Dorsolateral prefrontal cortex (tissue), 120 donors: ENCODE measurements at regions of chr6 and their contacts with region 1.

Region 1: DNA sequence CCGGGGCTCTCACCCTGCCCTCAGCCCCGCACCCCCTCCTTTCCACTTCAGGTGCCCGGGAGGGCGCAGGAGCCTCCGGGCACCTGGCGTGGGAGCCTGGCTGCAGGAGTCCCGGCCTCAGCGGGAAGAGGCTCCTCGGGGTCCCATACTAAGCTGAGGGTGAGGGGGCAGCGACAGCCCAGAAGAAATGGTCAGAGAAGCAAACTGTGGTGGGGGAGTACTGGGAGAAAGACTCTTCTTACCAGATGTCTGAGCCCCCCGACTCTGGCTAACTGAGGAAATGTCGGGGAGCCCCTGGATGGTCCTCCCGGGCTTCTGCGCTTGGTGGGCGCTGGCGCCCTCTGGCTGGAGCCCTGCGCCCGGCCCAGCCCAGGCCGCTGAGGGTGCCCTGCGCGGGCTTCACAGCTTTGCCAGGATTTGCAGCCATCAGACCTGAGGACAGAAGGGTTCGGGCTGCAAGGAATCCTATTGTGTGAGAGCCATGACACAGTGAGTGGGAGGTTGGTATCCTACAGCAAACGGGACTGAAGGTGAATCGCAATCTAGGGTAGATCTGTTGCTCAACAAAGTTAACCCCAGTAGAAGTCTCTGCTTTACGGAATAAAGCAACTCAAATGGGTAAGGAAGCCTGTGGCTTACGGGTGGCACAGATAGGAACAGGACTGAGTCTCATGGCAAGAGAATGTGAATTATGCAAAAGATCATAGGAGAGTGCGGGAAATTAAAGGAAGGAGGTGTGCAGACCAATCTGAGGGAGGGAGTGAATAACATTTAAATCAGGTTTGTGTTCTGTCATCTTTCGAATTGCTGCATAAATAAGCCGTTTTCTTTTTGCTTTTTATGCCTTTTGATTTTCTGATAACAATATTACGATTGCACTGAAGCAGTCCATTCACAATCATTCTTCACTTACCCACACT is 639 bp upstream of the RCAN2 start:
- DNase-seq: peak; percentile 64 to 88 (median 78)
- H3K4me3 ChIP-seq: peak overlapping the region; percentile 61 to 90 (median 78)
- H3K27ac ChIP-seq: peak overlapping the region in 58 of 59 donors; percentile 61 to 95 (median 89)
- H3K27me3 ChIP-seq: no peaks in the 10 kb centered on the region
- CTCF ChIP-seq: peak; percentile 17 to 92 (median 78)

Region 2: GRCh38 chr6:46221222-46221793 is 270.6 kb before region 1 on chr6:
- intact Hi-C with region 1: loop called in 1 of 2 experiments (anchors 5 kb)
- DNase-seq: no peak
- H3K4me3 ChIP-seq: no peak overlapping the region
- H3K27ac ChIP-seq: peak overlapping the region in 34 of 59 donors; percentile 0 to 83 (median 31)
- H3K27me3 ChIP-seq: no peaks in the 10 kb centered on the region
- CTCF ChIP-seq: peak; percentile 52 to 99 (median 92)

Region 3: GRCh38 chr6:46437671-46438221 is 54.1 kb before region 1 on chr6:
- intact Hi-C with region 1: loop called in 1 of 2 experiments (anchors 5 kb)
- DNase-seq: no peak
- H3K4me3 ChIP-seq: no peak overlapping the region
- H3K27ac ChIP-seq: peak overlapping the region in 33 of 59 donors; percentile 1 to 74 (median 53)
- H3K27me3 ChIP-seq: no peaks in the 10 kb centered on the region
- CTCF ChIP-seq: no peak

Region 4: DNA sequence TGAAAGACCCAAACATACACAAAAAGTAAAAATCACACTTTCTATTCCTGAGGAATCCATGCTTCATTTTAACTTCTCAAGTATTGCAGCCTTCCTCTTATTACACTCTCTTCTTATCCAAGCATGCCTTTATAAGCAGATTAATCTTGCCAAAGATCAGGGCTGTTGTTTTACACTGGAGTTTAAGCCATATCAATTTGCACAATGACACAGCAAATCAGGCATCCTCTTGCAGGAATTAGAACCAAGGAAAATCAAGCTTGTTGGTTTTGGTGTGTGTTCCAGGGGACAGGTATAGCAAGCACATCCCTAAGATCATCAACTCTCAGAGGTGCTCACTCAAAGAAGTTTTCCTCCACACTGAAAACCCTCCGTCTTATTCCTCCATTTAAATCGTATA is 91.2 kb after region 1 on chr6:
- intact Hi-C with region 1: loop called in 1 of 2 experiments (anchors 10 kb)
- DNase-seq: no peak
- H3K4me3 ChIP-seq: no peak overlapping the region
- H3K27ac ChIP-seq: no peak overlapping the region
- H3K27me3 ChIP-seq: no peaks in the 10 kb centered on the region
- CTCF ChIP-seq: no peak

Region 5: DNA sequence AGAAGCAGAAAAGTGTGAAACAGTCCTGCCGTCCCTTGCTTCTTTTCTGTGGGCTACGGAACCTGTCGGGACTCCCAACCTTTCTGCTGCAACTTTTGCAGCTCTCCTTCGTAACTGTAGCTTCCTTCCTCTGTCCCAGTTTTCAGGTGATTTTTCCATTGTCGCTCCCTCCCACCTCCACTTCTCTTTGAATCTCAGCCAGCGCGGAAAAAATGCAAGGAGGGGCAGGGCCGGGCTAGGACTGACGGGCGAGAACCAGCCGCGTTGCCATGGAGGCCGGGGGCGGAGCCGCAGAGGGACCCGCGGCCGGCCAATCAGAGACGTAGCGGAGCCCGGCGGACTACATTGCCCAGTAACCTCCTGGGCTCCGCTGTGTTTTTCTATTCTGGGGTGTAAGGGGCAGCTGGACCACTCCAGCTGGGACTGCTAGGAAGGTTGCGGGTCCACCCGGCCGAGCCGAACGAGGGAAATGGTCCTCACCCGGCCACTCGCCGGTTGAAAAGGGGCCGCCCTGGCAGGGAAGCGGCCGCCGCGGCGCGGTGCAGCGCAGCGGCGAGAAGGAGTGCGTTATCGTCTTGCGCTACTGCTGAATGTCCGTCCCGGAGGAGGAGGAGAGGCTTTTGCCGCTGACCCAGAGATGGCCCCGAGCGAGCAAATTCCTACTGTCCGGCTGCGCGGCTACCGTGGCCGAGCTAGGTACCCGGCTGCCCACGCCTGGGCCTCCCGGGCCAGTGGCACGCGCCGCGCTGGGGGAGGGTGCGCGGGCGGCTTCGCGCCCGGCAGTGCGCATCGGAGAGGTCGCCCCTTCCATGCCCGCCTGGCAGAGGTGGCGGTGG is 160.9 kb after region 1 on chr6 and contains the starts of genes CYP39A1 and SLC25A27:
- intact Hi-C with region 1: loop called in 1 of 2 experiments (anchors 2 kb)
- DNase-seq: peak; percentile 92 to 100 (median 96)
- H3K4me3 ChIP-seq: peak within 1 kb of the TSS; percentile 60 to 99 (median 90)
- H3K27ac ChIP-seq: peak within 1 kb of the TSS; percentile 2 to 97 (median 90)
- H3K27me3 ChIP-seq: no peaks in the 10 kb centered on the region
- CTCF ChIP-seq: peak in 16 of 56 donors; percentile 9 to 43 (median 17)
- total RNA-seq, gene CYP39A1: 0.42 to 8.4 (median 1.6) TPM
- total RNA-seq, gene SLC25A27: 49.4 to 116 (median 85.1) TPM